ENCODE measurements at regions of chr10 and their contacts with region 1.

Region 1: GRCh38 chr10:70381471-70382421 is 679 bp downstream of the LRRC20 start:
- DNase-seq: no peak
- H3K4me3 Mint-ChIP-seq: peak overlapping the region; percentile 75
- H3K27ac Mint-ChIP-seq: no peak overlapping the region
- H3K4me1 Mint-ChIP-seq: peaks cover 20% of the 10 kb centered on the region
- H3K27me3 Mint-ChIP-seq: no peaks in the 10 kb centered on the region
- CTCF ChIP-seq: no peak

Region 2: GRCh38 chr10:70343312-70343711 is 38.4 kb before region 1 on chr10:
- CTCF ChIA-PET with region 1: interaction called, 3 read pairs
- POLR2A ChIA-PET with region 1: no interaction called
- intact Hi-C with region 1: loop called (anchors 2 kb)
- DNase-seq: no peak
- H3K4me3 Mint-ChIP-seq: no peak overlapping the region
- H3K27ac Mint-ChIP-seq: no peak overlapping the region
- H3K4me1 Mint-ChIP-seq: peaks cover 21% of the 10 kb centered on the region
- H3K27me3 Mint-ChIP-seq: no peaks in the 10 kb centered on the region
- CTCF ChIP-seq: no peak

Region 3: GRCh38 chr10:70540089-70540788 is 158.5 kb after region 1 on chr10:
- CTCF ChIA-PET with region 1: no interaction called
- POLR2A ChIA-PET with region 1: no interaction called
- intact Hi-C with region 1: loop called (anchors 5 kb)
- DNase-seq: peak; percentile 43
- H3K4me3 Mint-ChIP-seq: no peak overlapping the region
- H3K27ac Mint-ChIP-seq: no peak overlapping the region
- H3K4me1 Mint-ChIP-seq: no peaks in the 10 kb centered on the region
- H3K27me3 Mint-ChIP-seq: peaks cover 26% of the 10 kb centered on the region
- CTCF ChIP-seq: peak; percentile 75

Measured in MCF 10A (cell line).